ENCODE measurements at regions of chr10 and their contacts with region 1.

Region 1: GRCh38 chr10:96513698-96514561 is at the start of gene TLL2:
- DNase-seq: peak; percentile 94
- H3K4me3 ChIP-seq: peak within 1 kb of the TSS; percentile 52 to 73
- H3K27ac ChIP-seq: peak within 1 kb of the TSS; percentile 2 to 50; a peak in 3 of 4 replicates
- H3K4me1 ChIP-seq: peaks cover 11 to 26% of the 10 kb centered on the region in 2 experiments; a peak in 3 of 4 replicates
- H3K27me3 ChIP-seq: no peaks in the 10 kb centered on the region; the same call in 1 of the 2 replicates
- CTCF ChIP-seq: peak; percentile 61
- EP300 ChIP-seq: no peak
- RAD21 ChIP-seq: peak; percentile 57
- polyA plus RNA-seq, gene TLL2: 0.28 and 0.36 TPM in 2 replicates

Region 2: DNA sequence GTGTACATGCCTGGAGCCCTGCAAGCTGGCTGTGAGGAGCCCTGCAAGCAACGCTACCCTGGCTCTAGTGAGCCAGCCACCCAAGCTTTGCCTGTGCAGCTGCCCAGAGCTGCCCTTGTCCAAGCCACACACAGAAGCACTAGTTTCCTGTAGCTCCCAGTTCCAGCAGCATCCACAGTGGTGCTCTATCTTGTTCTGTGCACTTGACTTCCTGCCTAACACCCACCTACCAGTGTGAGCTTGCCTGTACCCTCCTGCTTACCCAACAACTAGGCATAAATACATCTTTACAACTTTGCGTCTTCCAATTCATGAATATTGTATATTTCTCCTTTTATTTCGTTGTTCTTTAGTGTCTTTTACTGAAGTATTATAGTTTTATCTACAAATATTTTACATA is 416.1 kb before region 1 on chr10:
- CTCF ChIA-PET with region 1: no interaction called
- POLR2A ChIA-PET with region 1: no interaction called
- DNase-seq: no peak
- H3K4me3 ChIP-seq: no peak overlapping the region
- H3K27ac ChIP-seq: no peak overlapping the region
- H3K4me1 ChIP-seq: no peaks in the 10 kb centered on the region
- H3K27me3 ChIP-seq: peaks cover 24% of the 10 kb centered on the region; the same call in 1 of the 2 replicates
- CTCF ChIP-seq: no peak
- EP300 ChIP-seq: no peak
- RAD21 ChIP-seq: no peak

Region 3: GRCh38 chr10:96366502-96366901 is 147.4 kb before region 1 on chr10:
- CTCF ChIA-PET with region 1: interaction called, 15 read pairs
- POLR2A ChIA-PET with region 1: no interaction called
- DNase-seq: no peak
- H3K4me3 ChIP-seq: no peak overlapping the region
- H3K27ac ChIP-seq: no peak overlapping the region
- H3K4me1 ChIP-seq: no peaks in the 10 kb centered on the region
- H3K27me3 ChIP-seq: no peaks in the 10 kb centered on the region; the same call in 1 of the 2 replicates
- CTCF ChIP-seq: no peak
- EP300 ChIP-seq: no peak
- RAD21 ChIP-seq: no peak

Region 4: DNA sequence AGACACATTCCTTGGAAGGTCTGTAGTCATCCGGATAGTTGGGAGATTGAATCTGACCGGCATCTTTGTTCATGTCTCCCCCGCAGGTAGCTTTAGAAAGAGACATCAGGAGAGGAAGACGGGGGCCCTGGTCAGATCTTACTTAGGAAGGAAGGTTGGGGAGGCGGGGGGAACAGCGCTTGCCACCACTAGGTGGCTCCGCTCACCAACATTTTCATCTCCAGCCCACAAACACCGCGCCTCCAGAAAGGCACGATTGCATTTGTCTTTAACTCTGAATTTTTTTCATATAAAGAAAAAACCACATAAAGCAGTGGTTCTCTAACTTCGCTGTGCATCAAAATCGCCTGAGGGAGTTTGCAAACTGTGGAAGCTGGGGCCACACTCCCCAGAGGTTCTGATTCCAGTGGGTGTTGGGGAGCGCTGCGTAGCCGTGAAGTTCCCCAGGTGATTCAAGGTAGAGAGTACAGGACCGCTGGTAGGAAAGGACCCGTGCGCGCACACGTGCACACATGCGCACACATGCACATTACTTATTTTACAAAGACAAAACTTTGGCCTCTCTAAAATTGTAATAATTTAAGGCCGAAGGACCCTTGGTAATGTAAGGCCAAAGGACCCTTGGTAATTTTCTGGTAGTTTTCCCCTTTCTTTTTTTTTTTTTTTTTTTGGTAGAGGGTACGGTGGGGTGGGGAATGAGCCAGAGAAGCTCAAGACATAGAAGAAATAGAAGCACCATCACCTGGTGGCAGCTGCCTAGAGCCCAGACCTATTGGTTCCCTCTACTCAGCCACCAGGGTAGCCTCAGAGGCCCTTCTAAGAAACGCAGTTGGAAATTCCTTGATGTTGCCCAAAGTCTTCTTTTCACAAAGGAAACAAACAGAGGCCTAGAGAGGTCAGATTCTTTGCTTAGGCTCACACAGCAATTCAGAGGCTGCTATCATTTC is 117.7 kb before region 1 on chr10:
- CTCF ChIA-PET with region 1: interaction called, 159 read pairs
- POLR2A ChIA-PET with region 1: interaction called, 3 read pairs
- DNase-seq: peak; percentile 87
- H3K4me3 ChIP-seq: no peak overlapping the region
- H3K27ac ChIP-seq: no peak overlapping the region
- H3K4me1 ChIP-seq: no peaks in the 10 kb centered on the region; a peak in 1 of 4 replicates
- H3K27me3 ChIP-seq: peaks cover 25% of the 10 kb centered on the region; the same call in 1 of the 2 replicates
- CTCF ChIP-seq: peak; percentile 90
- EP300 ChIP-seq: no peak
- RAD21 ChIP-seq: peak; percentile 88

Region 5: DNA sequence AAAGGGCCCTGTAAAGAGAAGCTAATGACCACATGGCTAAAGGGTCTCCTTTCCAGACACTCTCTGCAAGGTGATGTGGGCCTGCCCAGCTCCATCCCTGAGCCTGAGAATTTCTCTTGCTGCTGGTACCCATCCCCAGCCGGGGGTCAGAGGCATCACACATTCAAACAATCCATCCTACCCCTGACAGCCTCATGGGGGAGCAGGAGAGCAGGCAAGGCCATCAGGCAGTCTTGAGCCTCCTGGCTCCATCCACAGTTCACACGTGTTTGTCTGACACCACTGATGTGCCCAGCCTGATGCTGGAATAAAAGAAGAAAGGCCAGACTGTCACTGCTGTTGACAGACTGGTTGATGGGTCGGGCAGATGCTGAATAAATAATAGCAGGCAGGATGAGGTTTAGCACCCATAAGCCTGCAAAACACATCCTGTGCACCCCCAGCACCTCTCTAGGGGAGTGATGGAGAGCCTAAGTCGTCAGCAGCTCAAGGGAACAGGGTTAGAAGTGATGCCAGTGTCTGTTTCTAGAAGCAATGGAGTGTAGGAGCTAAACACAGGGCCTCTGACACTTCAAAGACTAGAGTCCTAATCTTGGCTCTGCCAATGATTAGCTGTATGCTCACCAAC is 43.7 kb before region 1 on chr10:
- CTCF ChIA-PET with region 1: interaction called, 21 read pairs
- POLR2A ChIA-PET with region 1: no interaction called
- DNase-seq: peak; percentile 78
- H3K4me3 ChIP-seq: no peak overlapping the region
- H3K27ac ChIP-seq: no peak overlapping the region
- H3K4me1 ChIP-seq: peaks cover 0 to 9% of the 10 kb centered on the region in 2 experiments; a peak in 1 of 4 replicates
- H3K27me3 ChIP-seq: no peaks in the 10 kb centered on the region; the same call in 1 of the 2 replicates
- CTCF ChIP-seq: peak; percentile 53
- EP300 ChIP-seq: no peak
- RAD21 ChIP-seq: peak; percentile 57

Region 6: DNA sequence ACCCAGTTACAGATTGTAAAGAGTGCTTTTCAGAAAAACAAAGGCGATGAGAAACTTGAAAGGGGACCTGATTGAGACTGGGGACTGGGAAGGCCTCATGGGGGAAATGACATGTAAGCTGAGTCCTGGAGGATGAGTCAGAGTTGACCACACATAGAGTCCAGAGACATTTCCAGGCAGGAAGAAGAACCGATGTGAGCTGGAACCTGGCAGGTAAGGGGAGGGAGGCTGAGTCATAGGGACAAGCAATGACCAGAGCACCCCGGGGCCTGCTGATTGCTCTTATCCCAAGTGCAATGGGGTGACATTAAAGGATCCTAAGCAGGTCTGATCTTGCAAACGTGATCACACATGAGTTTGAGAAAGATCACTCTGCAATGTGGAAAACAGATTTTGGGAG is 11.9 kb before region 1 on chr10:
- CTCF ChIA-PET with region 1: interaction called, 25 read pairs
- POLR2A ChIA-PET with region 1: no interaction called
- DNase-seq: no peak
- H3K4me3 ChIP-seq: no peak overlapping the region
- H3K27ac ChIP-seq: no peak overlapping the region
- H3K4me1 ChIP-seq: peaks cover 0 to 4% of the 10 kb centered on the region in 2 experiments; a peak in 1 of 4 replicates
- H3K27me3 ChIP-seq: no peaks in the 10 kb centered on the region
- CTCF ChIP-seq: no peak
- EP300 ChIP-seq: no peak
- RAD21 ChIP-seq: no peak

Region 7: GRCh38 chr10:96556003-96556402 is 42.1 kb after region 1 on chr10:
- CTCF ChIA-PET with region 1: interaction called, 10 read pairs
- POLR2A ChIA-PET with region 1: no interaction called
- DNase-seq: peak; percentile 22
- H3K4me3 ChIP-seq: no peak overlapping the region
- H3K27ac ChIP-seq: no peak overlapping the region
- H3K4me1 ChIP-seq: no peaks in the 10 kb centered on the region
- H3K27me3 ChIP-seq: no peaks in the 10 kb centered on the region
- CTCF ChIP-seq: peak; percentile 58
- EP300 ChIP-seq: no peak
- RAD21 ChIP-seq: peak; percentile 67